ENCODE measurements at regions of chr5 and their contacts with region 1.

Region 1: GRCh38 chr5:84162695-84163094 is 222.0 kb downstream of the EDIL3 start:
- DNase-seq: no peak
- H3K4me3 ChIP-seq: no peak overlapping the region
- H3K27ac ChIP-seq: no peak overlapping the region
- H3K4me1 ChIP-seq: no peaks in the 10 kb centered on the region
- H3K27me3 ChIP-seq: no peaks in the 10 kb centered on the region
- CTCF ChIP-seq: no peak

Region 2: GRCh38 chr5:83377131-83377865 is 785.4 kb before region 1 on chr5:
- CTCF ChIA-PET with region 1: interaction called, 14 read pairs
- dilution Hi-C with region 1: no loop called
- in situ Hi-C with region 1: no loop called
- intact Hi-C with region 1: no loop called
- DNase-seq: peak; percentile 62
- H3K4me3 ChIP-seq: no peak overlapping the region
- H3K27ac ChIP-seq: no peak overlapping the region
- H3K4me1 ChIP-seq: peaks cover 4% of the 10 kb centered on the region
- H3K27me3 ChIP-seq: no peaks in the 10 kb centered on the region
- CTCF ChIP-seq: no peak